Dendritic cell treated with granulocyte-macrophage colony-stimulating factor and Interleukin-4, amounts not matched to agents 40 ng/mL and 50 ng/mL, for 4 days (primary cell): ENCODE measurements at regions of chr13 and their contacts with region 1.

Region 1: GRCh38 chr13:33110713-33111413 is 94.6 kb downstream of the KL start:
- H3K4me3 Mint-ChIP-seq: peak overlapping the region; percentile 30
- H3K27ac Mint-ChIP-seq: peak overlapping the region; percentile 85
- H3K4me1 Mint-ChIP-seq: peaks cover 75% of the 10 kb centered on the region
- H3K27me3 Mint-ChIP-seq: no peaks in the 10 kb centered on the region

Region 2: DNA sequence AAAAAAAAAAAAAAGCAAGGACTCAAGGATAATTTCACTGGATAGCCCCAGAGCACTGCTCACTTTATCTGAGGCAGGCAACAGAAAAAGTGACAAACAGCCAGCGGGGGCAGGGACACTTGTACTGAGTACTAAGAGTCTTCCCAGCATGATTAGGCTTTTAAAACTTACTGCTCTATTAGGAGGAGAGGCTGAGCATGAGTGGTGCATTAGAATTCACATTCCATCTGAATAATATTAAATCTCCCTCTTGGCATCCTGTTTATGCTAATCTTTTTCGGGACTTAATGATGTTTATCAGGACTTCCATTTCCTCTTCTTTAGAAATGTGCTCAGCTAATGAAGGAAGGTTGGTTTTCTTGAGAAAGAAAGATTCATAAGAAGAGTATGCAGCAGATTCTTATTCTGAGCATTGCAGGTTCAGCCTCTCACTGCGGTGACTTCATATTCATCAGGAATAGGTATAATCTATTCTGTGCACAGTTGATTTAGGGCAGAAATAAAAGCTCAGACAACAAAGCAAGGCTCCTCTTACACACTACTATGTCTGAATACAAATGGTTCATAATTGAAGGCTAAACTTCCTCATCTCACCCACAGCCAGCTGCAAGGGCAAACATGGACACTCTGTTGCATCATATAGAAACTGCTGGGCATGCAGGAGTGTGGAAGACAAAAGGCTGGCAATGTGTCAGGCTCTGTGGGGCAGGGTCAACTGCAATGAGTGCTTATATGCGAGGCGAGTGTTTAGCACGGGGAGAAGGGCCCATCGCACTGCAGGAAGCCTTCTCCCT is 12.4 kb after region 1 on chr13:
- intact Hi-C with region 1: loop called (anchors 1 kb)
- H3K4me3 Mint-ChIP-seq: no peak overlapping the region
- H3K27ac Mint-ChIP-seq: peak overlapping the region; percentile 86
- H3K4me1 Mint-ChIP-seq: peaks cover 58% of the 10 kb centered on the region
- H3K27me3 Mint-ChIP-seq: no peaks in the 10 kb centered on the region

Region 3: GRCh38 chr13:33204130-33204927 is 93.5 kb after region 1 on chr13:
- intact Hi-C with region 1: loop called (anchors 10 kb)
- H3K4me3 Mint-ChIP-seq: no peak overlapping the region
- H3K27ac Mint-ChIP-seq: no peak overlapping the region
- H3K4me1 Mint-ChIP-seq: peaks cover 40% of the 10 kb centered on the region
- H3K27me3 Mint-ChIP-seq: no peaks in the 10 kb centered on the region